ENCODE measurements at regions of chr7 and their contacts with region 1.

Region 1: DNA sequence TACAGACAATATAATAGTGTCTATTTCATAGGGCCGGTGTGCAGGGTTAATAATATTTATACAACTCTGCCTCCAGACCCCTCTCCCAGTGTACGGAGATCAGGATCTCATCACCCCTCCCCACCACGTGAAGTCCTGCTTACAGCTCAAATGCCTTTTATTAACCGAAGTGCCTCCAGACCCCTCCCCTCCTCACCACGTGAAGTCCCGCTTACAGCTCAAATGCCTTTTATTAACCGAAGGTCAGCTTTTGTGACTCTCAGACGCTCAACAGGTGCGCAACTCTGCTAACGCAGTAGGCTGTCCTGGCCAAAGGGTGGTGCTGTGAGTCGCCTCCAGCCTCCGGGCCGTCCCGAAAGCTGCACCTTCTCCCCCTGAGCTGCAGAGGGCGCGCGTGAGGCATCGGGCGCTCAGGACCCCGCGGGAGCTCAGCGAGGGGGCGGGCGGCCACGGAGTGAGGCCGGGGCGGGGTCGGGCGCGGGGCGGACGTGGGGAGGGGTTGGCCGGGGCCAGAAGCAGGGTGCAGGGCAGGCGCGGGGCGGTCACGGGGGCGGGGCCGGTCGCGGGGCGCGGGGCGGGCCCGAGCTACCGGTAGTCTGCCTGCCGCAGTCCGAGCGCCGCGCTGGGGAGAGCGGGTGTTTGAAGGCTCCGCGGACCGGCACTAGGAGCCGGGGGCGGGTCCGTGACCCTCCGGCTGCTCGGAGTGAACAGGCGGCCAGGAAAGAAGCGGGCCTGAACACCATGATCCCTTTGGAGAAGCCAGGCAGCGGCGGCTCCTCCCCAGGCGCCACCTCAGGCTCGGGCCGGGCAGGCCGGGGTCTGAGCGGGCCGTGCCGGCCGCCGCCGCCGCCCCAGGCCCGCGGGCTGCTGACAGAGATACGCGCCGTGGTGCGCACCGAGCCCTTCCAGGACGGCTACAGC is at the start of gene STK17A:
- DNase-seq: peak; percentile 95
- H3K4me3 Mint-ChIP-seq: peak within 1 kb of the TSS; percentile 86
- H3K27ac Mint-ChIP-seq: peak within 1 kb of the TSS; percentile 93
- H3K4me1 Mint-ChIP-seq: peaks cover 20% of the 10 kb centered on the region
- H3K27me3 Mint-ChIP-seq: peaks cover 7% of the 10 kb centered on the region
- total RNA-seq, gene STK17A: 48.9 to 52.8 TPM

Region 2: GRCh38 chr7:42931834-42932651 is 650.7 kb before region 1 on chr7 and contains the starts of genes MRPL32 and PSMA2:
- CTCF ChIA-PET with region 1: no interaction called
- intact Hi-C with region 1: loop called (anchors 2 kb)
- DNase-seq: peak; percentile 95
- H3K4me3 Mint-ChIP-seq: peak within 1 kb of the TSS; percentile 100
- H3K27ac Mint-ChIP-seq: peak within 1 kb of the TSS; percentile 100
- H3K4me1 Mint-ChIP-seq: peaks cover 60% of the 10 kb centered on the region
- H3K27me3 Mint-ChIP-seq: no peaks in the 10 kb centered on the region
- total RNA-seq, gene MRPL32: 67.4 to 71.8 TPM
- total RNA-seq, gene PSMA2: 199 to 221 TPM

Region 3: DNA sequence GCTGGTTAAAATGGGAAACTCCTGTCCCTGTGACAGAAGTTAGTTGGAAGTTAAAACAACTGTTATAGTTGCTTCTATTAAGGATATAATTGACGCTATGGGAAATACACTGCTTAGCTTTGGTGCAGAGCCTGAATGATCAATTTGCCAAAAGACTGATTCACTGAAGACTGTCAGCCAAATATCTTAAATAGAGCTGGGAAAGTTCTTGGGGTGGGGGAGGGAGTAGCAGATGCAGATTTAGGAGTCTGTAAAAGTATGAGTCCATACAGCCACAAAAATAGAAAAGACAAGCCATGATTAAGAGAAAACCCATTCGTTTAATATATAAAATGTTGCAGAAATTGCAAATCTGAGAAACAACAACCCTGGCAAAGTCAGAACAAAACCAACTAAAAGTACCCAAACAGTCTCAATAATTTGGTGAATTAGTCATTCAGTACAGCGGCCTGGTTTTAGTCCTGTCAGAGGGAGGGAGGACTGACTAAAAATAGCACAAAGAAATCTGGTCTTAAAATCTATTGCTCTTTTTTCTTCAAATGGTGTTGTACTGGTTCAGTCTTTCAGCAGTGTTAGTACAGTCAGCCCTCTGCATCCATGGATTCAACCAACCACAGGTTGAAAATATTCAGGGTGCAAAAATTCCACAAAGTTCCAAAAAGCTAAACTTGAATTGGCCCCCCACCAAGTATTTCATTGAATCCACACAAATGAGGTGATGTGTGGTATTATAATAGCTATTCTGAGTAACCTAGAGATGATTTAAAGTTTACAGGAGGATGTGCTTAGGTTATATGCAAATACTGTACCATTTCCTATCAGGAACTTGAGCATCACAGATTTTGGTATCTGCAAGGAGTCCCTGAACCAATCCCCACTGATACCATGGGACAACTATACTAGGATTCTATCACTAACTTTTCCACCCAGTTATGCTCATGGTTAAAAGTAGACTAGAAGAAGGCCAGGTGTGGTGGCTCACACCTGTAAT is 30.1 kb after region 1 on chr7:
- CTCF ChIA-PET with region 1: interaction called, 44 read pairs
- intact Hi-C with region 1: loop called (anchors 1 kb)
- DNase-seq: peak; percentile 54
- H3K4me3 Mint-ChIP-seq: peak overlapping the region; percentile 6
- H3K27ac Mint-ChIP-seq: peak overlapping the region; percentile 77
- H3K4me1 Mint-ChIP-seq: peaks cover 72% of the 10 kb centered on the region
- H3K27me3 Mint-ChIP-seq: no peaks in the 10 kb centered on the region

Region 4: GRCh38 chr7:43647673-43648472 is 65.1 kb after region 1 on chr7:
- CTCF ChIA-PET with region 1: interaction called, 172 read pairs
- intact Hi-C with region 1: loop called (anchors 1 kb)
- DNase-seq: peak; percentile 87
- H3K4me3 Mint-ChIP-seq: peak overlapping the region; percentile 62
- H3K27ac Mint-ChIP-seq: peak overlapping the region; percentile 98
- H3K4me1 Mint-ChIP-seq: peaks cover 94% of the 10 kb centered on the region
- H3K27me3 Mint-ChIP-seq: no peaks in the 10 kb centered on the region

Region 5: GRCh38 chr7:43693687-43694398 is 111.1 kb after region 1 on chr7:
- CTCF ChIA-PET with region 1: interaction called, 388 read pairs
- intact Hi-C with region 1: no loop called
- DNase-seq: no peak
- H3K4me3 Mint-ChIP-seq: no peak overlapping the region
- H3K27ac Mint-ChIP-seq: no peak overlapping the region
- H3K4me1 Mint-ChIP-seq: peaks cover 38% of the 10 kb centered on the region
- H3K27me3 Mint-ChIP-seq: no peaks in the 10 kb centered on the region

Region 6: GRCh38 chr7:43729214-43729923 is 146.6 kb after region 1 on chr7 and contains the start of gene COA1:
- CTCF ChIA-PET with region 1: interaction called, 27 read pairs
- intact Hi-C with region 1: loop called (anchors 1 kb)
- DNase-seq: peak; percentile 87
- H3K4me3 Mint-ChIP-seq: peak within 1 kb of the TSS; percentile 90
- H3K27ac Mint-ChIP-seq: peak within 1 kb of the TSS; percentile 89
- H3K4me1 Mint-ChIP-seq: peaks cover 35% of the 10 kb centered on the region
- H3K27me3 Mint-ChIP-seq: peaks cover 7% of the 10 kb centered on the region
- total RNA-seq, gene COA1: 85.9 to 87.2 TPM

Region 7: GRCh38 chr7:43799589-43799988 is 216.8 kb after region 1 on chr7:
- CTCF ChIA-PET with region 1: interaction called, 15 read pairs
- intact Hi-C with region 1: no loop called
- DNase-seq: peak; percentile 9
- H3K4me3 Mint-ChIP-seq: no peak overlapping the region
- H3K27ac Mint-ChIP-seq: no peak overlapping the region
- H3K4me1 Mint-ChIP-seq: no peaks in the 10 kb centered on the region
- H3K27me3 Mint-ChIP-seq: no peaks in the 10 kb centered on the region

Region 8: DNA sequence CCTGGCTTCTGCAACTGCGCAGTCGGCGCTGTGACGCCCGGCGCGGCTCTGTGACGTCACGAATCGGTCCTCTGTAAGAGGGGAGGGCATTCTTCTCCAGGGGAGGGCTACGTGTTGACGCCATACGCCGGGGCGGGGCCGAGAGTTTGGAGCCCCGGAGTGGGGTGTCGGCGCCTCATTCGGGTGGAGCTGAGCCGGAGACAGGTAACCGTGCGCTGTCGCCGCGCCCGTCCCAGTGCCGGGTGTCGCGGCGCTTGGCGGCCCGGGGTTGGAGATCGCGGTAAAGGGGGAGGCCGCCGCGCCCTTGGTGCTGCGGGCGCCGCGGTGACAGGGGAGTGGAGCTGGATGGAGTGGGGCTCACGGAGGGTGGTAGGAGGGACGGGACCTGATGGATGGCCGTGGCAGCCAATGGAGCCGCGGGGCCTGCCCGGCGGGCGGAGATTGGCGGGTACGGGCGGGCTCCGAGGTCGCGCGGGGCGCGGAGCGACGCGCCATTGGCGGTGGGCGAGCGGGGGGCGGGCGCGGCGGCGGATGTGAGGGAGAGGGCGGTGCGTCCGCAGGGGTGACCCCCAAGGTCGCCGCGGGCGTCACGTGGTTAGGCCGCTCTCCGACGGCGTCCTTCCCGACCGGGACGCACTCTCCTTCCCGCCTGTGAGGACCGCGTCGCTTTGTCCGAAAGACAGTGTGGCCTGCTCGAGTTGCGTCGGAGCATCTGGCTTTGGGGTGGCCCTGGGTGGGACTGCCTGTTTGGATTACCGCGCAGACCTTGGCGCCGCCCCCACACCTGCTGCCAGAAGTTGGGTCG is 1023.9 kb after region 1 on chr7 and contains the start of gene OGDH:
- CTCF ChIA-PET with region 1: no interaction called
- intact Hi-C with region 1: no loop called
- DNase-seq: peak; percentile 100
- H3K4me3 Mint-ChIP-seq: peak within 1 kb of the TSS; percentile 96
- H3K27ac Mint-ChIP-seq: peak within 1 kb of the TSS; percentile 97
- H3K4me1 Mint-ChIP-seq: peaks cover 31% of the 10 kb centered on the region
- H3K27me3 Mint-ChIP-seq: no peaks in the 10 kb centered on the region
- total RNA-seq, gene OGDH: 73.9 to 78.4 TPM